Activated CD4-positive, alpha-beta T cell treated with anti-CD3 and anti-CD28 coated beads, Interleukin-2, amount 10 ng/mL, durations not matched to agents 24 days and 14 days (primary cell): ENCODE measurements at regions of chr2 and their contacts with region 1.

Region 1: GRCh38 chr2:393711-394696 is 106.1 kb upstream of the ALKAL2 start:
- DNase-seq: peak; percentile 92
- H3K4me3 Mint-ChIP-seq: peak overlapping the region; percentile 77
- H3K27ac Mint-ChIP-seq: peak overlapping the region; percentile 86
- H3K4me1 Mint-ChIP-seq: peaks cover 13% of the 10 kb centered on the region
- H3K27me3 Mint-ChIP-seq: no peaks in the 10 kb centered on the region

Region 2: DNA sequence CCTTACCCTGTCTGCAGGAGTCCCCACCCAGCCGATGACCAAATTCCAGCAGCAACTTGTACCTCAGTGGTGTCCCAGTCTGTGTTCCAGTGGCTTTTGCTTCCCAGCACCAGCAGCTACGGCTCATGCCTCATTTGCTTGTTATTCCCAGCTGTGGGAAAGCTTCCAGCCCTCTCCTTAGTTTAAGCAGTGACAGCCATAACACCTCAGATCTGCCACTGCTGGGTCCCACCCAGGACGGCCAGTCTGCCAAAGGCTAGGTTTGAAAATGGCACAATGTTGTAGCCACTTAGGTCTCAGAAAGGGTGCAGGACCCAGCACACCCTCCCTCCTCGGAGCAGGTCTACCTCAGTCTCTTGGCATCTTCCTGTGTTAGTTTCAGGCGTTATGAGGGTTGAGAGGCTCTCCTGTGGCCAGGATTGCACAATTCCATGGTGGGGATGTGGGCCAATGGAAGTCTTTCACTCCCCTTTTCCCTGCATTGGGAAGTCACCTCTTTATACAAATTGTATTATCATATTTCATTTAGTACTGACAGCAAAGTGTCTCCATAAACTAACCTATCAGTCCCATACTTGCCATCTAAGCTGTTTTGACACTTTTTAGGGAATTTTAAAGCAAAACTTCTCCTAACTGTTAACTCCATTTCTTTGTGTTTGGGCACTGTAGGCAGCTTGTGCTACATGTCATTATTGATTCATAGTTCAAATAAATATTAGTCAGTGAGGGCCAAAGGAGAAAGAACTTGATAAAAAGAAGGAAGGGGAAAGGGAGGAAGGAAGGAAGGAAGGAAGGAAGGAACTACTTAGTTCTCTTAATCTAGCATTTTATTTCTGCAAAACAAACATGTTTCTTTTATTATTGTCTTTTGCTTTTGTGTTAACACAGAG is 284.8 kb before region 1 on chr2:
- intact Hi-C with region 1: no loop called
- DNase-seq: no peak
- H3K4me3 Mint-ChIP-seq: no peak overlapping the region
- H3K27ac Mint-ChIP-seq: no peak overlapping the region
- H3K4me1 Mint-ChIP-seq: no peaks in the 10 kb centered on the region
- H3K27me3 Mint-ChIP-seq: peaks cover 10% of the 10 kb centered on the region

Region 3: DNA sequence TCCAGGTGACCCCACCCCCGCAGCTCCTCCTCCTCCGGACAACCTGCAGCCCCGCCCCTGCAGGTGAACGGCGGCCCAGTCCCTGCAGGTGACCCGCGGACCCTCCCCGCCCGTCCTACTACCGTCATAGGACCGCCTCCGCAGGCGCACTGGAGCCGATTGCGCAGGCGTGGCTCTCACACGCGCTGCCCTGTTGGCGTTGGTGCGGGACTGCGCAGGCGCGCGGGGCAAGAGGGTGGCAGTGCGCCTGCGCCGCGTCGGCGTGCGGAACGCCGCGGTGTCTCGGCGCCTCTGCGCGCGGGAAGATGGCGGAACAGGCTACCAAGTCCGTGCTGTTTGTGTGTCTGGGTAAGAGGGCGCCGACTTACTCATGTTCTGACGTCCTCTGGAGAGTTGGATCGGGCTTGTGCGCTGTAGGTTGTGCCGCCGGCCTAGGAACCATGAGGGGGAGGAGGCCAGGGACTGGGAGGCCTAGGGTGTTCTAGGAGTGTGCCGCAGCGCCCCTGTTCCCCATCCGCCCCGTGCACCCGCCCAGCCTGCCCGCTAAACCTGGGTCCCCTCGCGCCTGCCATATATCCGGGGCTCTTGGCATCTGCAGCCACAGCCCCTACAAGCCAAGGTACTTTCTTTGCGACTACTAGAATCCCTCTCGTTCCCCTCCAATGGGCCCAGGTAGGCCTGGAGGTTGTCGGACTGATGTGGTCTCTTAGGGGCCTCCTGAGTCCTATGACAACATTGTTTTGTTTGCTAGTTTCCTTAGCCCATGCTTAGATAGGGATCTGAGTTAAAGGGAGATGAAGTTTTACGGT is 129.1 kb before region 1 on chr2 and contains the start of gene ACP1:
- intact Hi-C with region 1: loop called (anchors 2 kb)
- DNase-seq: peak; percentile 99
- H3K4me3 Mint-ChIP-seq: peak within 1 kb of the TSS; percentile 97
- H3K27ac Mint-ChIP-seq: peak within 1 kb of the TSS; percentile 97
- H3K4me1 Mint-ChIP-seq: peaks cover 40% of the 10 kb centered on the region
- H3K27me3 Mint-ChIP-seq: no peaks in the 10 kb centered on the region
- total RNA-seq, gene ACP1: 124 and 127 TPM in 2 replicates

Region 4: DNA sequence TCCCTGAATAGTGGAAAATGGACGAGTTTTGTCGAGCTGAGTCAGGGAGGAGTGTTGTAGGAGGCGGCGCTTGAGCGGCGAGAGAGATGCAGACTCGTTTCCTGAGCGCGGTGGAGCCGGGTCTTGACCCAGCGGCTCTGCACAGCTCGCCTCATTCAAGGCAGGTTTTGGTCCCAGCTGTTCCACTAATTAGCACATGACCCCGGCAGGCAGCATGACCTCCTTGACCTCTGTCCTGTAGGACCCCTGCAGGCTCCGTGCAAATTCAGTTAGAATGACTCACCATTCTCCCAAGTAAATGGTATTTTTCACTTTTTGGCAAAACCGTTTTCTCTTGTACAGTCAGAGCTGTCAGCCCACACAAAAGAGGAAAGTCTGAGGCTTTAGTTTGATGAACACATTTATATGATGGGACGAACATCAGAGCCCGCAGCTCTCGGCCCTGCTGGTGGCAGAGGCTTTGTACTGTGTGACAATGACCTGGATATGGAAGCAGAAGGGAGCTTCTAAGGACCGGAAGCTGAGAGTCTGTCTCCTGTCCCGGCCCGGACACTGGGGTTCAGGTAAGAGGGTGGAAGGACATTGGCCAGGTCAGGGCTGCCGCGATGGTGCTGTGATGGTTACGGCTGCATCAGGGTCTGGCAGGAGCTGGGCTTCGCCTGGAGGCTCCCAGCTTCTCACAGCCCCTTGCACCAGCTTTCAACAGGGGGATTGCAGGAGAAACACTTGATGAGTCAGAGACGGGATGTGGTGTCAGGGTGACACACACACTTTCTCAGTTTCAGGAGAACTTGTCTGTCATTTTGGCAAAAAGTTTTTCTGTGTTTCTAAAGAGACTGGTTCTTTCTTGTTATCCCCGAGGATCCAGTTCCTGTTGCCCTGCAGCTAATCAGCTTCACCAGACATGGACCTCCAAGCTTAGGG is 76.2 kb before region 1 on chr2:
- intact Hi-C with region 1: loop called (anchors 2 kb)
- DNase-seq: peak; percentile 70
- H3K4me3 Mint-ChIP-seq: peak overlapping the region; percentile 64
- H3K27ac Mint-ChIP-seq: peak overlapping the region; percentile 93
- H3K4me1 Mint-ChIP-seq: peaks cover 29% of the 10 kb centered on the region
- H3K27me3 Mint-ChIP-seq: peaks cover 6% of the 10 kb centered on the region

Region 5: DNA sequence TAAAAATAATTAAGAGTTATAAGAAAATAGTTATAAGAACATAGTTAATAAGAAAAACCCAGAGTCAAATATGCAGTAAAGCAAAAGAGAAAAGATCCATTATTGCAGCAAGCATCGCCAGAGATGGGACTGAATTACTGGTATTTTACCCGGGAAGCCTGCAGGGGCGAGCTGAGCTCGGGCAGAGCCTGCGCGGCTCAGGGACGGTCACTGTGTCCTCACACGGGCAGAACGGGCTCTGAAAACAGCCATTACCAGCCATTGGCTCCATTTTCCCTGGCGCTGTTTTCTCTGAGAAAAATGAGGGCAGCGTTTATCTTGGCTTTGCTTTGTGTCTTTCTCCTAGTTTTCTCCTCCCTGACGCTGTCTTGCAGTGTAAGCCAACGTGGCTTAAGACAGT is 10.8 kb before region 1 on chr2:
- intact Hi-C with region 1: no loop called
- DNase-seq: no peak
- H3K4me3 Mint-ChIP-seq: no peak overlapping the region
- H3K27ac Mint-ChIP-seq: no peak overlapping the region
- H3K4me1 Mint-ChIP-seq: no peaks in the 10 kb centered on the region
- H3K27me3 Mint-ChIP-seq: peaks cover 5% of the 10 kb centered on the region

Region 6: GRCh38 chr2:429575-430254 is 35.7 kb after region 1 on chr2:
- intact Hi-C with region 1: loop called (anchors 5 kb)
- DNase-seq: peak; percentile 79
- H3K4me3 Mint-ChIP-seq: peak overlapping the region; percentile 63
- H3K27ac Mint-ChIP-seq: peak overlapping the region; percentile 80
- H3K4me1 Mint-ChIP-seq: peaks cover 25% of the 10 kb centered on the region
- H3K27me3 Mint-ChIP-seq: peaks cover 5% of the 10 kb centered on the region